ENCODE measurements at regions of chr10 and their contacts with region 1.

Region 1: DNA sequence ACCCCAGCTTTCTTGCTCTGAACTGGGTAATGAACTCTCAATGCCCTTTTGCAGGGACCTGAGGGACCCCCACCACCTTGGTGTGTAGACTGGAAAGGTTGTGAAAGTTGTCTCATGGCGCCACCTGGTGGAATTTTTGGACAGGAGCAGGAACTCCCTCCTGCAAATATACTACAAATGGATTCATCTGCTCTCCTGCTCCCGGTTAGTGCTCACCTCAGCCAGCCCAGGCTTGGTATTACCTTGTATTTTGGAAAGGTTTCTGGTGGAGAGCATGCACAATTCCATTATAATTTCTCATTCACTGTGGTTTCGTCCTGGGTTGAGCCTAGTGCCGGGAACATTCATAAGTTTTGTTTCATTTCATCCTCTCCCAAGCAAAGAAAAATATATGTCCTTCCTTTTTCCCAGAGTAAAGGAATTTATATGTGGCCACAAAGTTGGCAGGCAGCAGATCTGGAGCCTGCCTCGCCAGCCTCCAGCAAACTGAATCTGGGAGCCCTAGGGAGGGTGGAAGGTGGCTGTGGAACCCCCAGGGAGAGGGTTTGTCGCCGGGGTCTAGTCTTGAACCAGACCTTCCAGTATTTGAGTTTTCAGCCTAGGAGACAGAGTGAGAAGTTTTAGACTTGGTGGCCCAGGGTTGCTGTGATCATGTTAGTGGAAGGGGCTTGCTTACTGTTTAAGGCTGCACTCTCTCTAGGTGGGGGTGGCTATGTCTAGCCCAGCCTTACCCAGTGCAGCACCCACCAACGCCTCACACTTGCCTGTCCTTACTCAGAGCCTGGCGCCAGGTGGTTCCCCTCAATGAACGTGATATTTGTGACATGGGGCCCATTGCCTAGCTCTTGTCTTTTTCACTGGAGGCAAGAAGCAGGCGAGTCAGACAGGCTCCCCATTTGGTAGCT is 9.5 kb downstream of the FAM241B start:
- DNase-seq: peak; percentile 67 to 73 (median 69)
- H3K4me3 ChIP-seq: no peak overlapping the region
- H3K4me3 Mint-ChIP-seq: no peak overlapping the region
- H3K27ac ChIP-seq: no peak overlapping the region
- H3K27ac Mint-ChIP-seq: peak overlapping the region in 1 of 7 donors; percentile 27
- H3K4me1 ChIP-seq: no peaks in the 10 kb centered on the region
- H3K4me1 Mint-ChIP-seq: peaks cover 0 to 4% (median 3%) of the 10 kb centered on the region in 4 donors
- H3K27me3 ChIP-seq: no peaks in the 10 kb centered on the region
- H3K27me3 Mint-ChIP-seq: peaks cover 0 to 2% of the 10 kb centered on the region in 2 donors

Region 2: GRCh38 chr10:69237528-69238159 is 401.9 kb before region 1 on chr10:
- CTCF ChIA-PET with region 1: no interaction called
- POLR2A ChIA-PET with region 1: no interaction called
- intact Hi-C with region 1: loop called (anchors 5 kb)
- DNase-seq: peak; percentile 78 to 82 (median 79)
- H3K4me3 ChIP-seq: no peak overlapping the region
- H3K4me3 Mint-ChIP-seq: peak overlapping the region in 2 of 8 donors; percentile 7 to 48
- H3K27ac ChIP-seq: no peak overlapping the region
- H3K27ac Mint-ChIP-seq: peak overlapping the region in 3 of 7 donors; percentile 11 to 63 (median 17)
- H3K4me1 ChIP-seq: peaks cover 17% of the 10 kb centered on the region
- H3K4me1 Mint-ChIP-seq: peaks cover 14 to 27% (median 17%) of the 10 kb centered on the region in 4 donors
- H3K27me3 ChIP-seq: no peaks in the 10 kb centered on the region
- H3K27me3 Mint-ChIP-seq: no peaks in the 10 kb centered on the region

Region 3: DNA sequence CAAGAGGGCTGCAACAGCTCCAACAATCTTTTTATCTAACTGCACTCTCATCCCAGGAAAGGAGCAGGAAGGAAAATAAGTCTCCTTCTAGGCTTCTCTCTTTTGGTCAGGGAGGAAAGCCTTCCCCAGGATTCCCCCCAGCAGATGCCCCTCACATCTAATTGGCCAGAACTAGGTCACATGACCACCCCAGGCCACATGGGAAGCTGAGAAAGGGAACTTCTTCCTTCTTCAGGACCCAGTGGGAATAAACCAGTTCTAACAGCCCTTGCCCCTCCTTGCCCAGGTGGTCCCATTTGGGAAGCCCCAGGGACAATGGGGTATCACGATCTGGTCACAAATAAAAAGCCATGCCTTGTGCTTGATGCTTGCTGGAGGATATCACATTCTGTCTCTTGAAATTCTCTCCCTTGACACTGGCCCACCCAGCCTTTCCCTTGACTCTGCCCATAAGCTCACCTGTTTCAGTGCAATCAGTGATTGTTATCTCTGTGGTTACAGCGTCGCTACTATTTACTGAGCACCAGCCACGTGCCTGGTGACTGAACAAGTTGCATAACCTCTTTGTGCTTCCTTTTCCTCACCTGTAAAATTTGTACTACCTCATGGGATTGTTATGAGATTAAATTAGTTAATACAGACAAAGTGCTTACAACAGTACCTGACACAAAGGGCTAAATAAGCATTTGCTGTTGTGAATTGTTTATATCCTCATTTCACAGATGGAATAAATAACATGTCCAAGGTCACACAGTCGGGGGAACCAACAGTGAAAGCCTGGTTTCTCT is 213.8 kb before region 1 on chr10:
- CTCF ChIA-PET with region 1: interaction called, 7 read pairs
- POLR2A ChIA-PET with region 1: no interaction called
- intact Hi-C with region 1: loop called (anchors 5 kb)
- DNase-seq: peak; percentile 73 to 86 (median 82)
- H3K4me3 ChIP-seq: no peak overlapping the region
- H3K4me3 Mint-ChIP-seq: peak overlapping the region in 7 of 8 donors; percentile 2 to 72 (median 47)
- H3K27ac ChIP-seq: peak overlapping the region; percentile 61
- H3K27ac Mint-ChIP-seq: peak overlapping the region; percentile 81 to 95 (median 90)
- H3K4me1 ChIP-seq: peaks cover 56% of the 10 kb centered on the region
- H3K4me1 Mint-ChIP-seq: peaks cover 46 to 71% (median 55%) of the 10 kb centered on the region in 4 donors
- H3K27me3 ChIP-seq: no peaks in the 10 kb centered on the region
- H3K27me3 Mint-ChIP-seq: no peaks in the 10 kb centered on the region

Region 4: GRCh38 chr10:69492091-69492750 is 147.3 kb before region 1 on chr10:
- CTCF ChIA-PET with region 1: no interaction called
- POLR2A ChIA-PET with region 1: no interaction called
- intact Hi-C with region 1: no loop called
- DNase-seq: no peak
- H3K4me3 ChIP-seq: no peak overlapping the region
- H3K4me3 Mint-ChIP-seq: no peak overlapping the region
- H3K27ac ChIP-seq: no peak overlapping the region
- H3K27ac Mint-ChIP-seq: peak overlapping the region in 3 of 7 donors; percentile 44 to 73 (median 48)
- H3K4me1 ChIP-seq: peaks cover 5% of the 10 kb centered on the region
- H3K4me1 Mint-ChIP-seq: peaks cover 0 to 3% (median 0%) of the 10 kb centered on the region in 4 donors
- H3K27me3 ChIP-seq: no peaks in the 10 kb centered on the region
- H3K27me3 Mint-ChIP-seq: no peaks in the 10 kb centered on the region

Region 5: GRCh38 chr10:69558559-69558958 is 81.0 kb before region 1 on chr10:
- CTCF ChIA-PET with region 1: no interaction called
- POLR2A ChIA-PET with region 1: no interaction called
- intact Hi-C with region 1: no loop called
- DNase-seq: peak in 3 of 5 donors; percentile 23 to 30 (median 29)
- H3K4me3 ChIP-seq: no peak overlapping the region
- H3K4me3 Mint-ChIP-seq: peak overlapping the region in 5 of 8 donors; percentile 11 to 63 (median 47)
- H3K27ac ChIP-seq: no peak overlapping the region
- H3K27ac Mint-ChIP-seq: peak overlapping the region in 2 of 7 donors; percentile 7 to 60
- H3K4me1 ChIP-seq: peaks cover 13% of the 10 kb centered on the region
- H3K4me1 Mint-ChIP-seq: peaks cover 12 to 18% (median 13%) of the 10 kb centered on the region in 4 donors
- H3K27me3 ChIP-seq: no peaks in the 10 kb centered on the region
- H3K27me3 Mint-ChIP-seq: peaks cover 9 to 10% of the 10 kb centered on the region in 2 donors

Region 6: GRCh38 chr10:69573056-69573806 is 66.3 kb before region 1 on chr10 and contains the start of gene NEUROG3:
- CTCF ChIA-PET with region 1: no interaction called
- POLR2A ChIA-PET with region 1: no interaction called
- intact Hi-C with region 1: loop called (anchors 10 kb)
- DNase-seq: no peak
- H3K4me3 ChIP-seq: peak within 1 kb of the TSS; percentile 29 to 32
- H3K4me3 Mint-ChIP-seq: peak within 1 kb of the TSS; percentile 77 to 85 (median 82)
- H3K27ac ChIP-seq: no peak within 1 kb of the TSS
- H3K27ac Mint-ChIP-seq: no peak within 1 kb of the TSS
- H3K4me1 ChIP-seq: peaks cover 33% of the 10 kb centered on the region
- H3K4me1 Mint-ChIP-seq: peaks cover 13 to 42% (median 25%) of the 10 kb centered on the region in 4 donors
- H3K27me3 ChIP-seq: peaks cover 50% of the 10 kb centered on the region
- H3K27me3 Mint-ChIP-seq: peaks cover 58 to 67% of the 10 kb centered on the region in 2 donors
- total RNA-seq, gene NEUROG3: not detected

Region 7: DNA sequence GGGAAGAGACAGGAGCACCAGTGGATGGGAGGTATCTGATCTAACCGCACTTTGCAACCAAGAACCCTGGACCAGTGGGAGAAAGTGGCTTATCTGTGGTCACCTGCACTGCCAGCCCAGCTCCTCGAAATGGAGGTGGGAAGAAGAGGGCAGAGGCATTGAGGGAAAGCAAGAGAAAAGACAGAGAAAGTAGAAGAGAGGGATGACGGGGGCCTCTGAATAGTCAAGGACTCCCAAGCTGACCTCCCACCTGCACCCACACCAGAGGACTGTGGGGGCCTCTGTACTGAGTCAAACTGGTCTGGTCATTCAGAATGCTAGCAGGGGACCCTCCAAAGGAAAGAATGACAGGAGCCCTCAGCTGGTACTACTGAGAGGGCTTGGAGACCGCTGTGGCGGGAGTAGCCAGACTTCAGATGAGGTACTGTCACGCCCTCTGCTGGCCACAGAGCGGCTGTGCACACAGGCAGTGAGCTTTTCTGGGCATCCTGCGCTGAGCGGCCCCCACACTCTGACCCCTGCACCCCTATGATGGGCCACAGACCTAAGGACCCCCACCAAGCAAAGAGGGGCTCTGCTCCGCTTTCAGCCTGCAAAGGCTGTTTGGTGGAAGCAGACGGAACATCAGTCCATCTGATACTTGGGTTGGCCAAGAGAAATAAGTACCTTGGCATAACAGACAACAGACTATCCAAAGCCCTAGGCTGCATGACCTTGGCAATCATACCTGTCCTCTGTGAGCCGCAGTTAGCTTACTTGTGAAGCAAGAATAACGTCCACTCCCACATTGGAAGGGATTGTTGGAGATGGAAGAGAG is 275.1 kb after region 1 on chr10:
- CTCF ChIA-PET with region 1: interaction called, 3 read pairs
- POLR2A ChIA-PET with region 1: interaction called, 3 read pairs
- intact Hi-C with region 1: loop called (anchors 10 kb)
- DNase-seq: peak in 4 of 5 donors; percentile 16 to 31 (median 26)
- H3K4me3 ChIP-seq: no peak overlapping the region
- H3K4me3 Mint-ChIP-seq: no peak overlapping the region
- H3K27ac ChIP-seq: no peak overlapping the region
- H3K27ac Mint-ChIP-seq: no peak overlapping the region
- H3K4me1 ChIP-seq: no peaks in the 10 kb centered on the region
- H3K4me1 Mint-ChIP-seq: no peaks in the 10 kb centered on the region
- H3K27me3 ChIP-seq: no peaks in the 10 kb centered on the region
- H3K27me3 Mint-ChIP-seq: peaks cover 2 to 12% of the 10 kb centered on the region in 2 donors

Measured in CD4-positive, alpha-beta memory T cell (primary cell).